CD4-positive, alpha-beta T cell (primary cell): ENCODE measurements at regions of chr7 and their contacts with region 1.

Region 1: DNA sequence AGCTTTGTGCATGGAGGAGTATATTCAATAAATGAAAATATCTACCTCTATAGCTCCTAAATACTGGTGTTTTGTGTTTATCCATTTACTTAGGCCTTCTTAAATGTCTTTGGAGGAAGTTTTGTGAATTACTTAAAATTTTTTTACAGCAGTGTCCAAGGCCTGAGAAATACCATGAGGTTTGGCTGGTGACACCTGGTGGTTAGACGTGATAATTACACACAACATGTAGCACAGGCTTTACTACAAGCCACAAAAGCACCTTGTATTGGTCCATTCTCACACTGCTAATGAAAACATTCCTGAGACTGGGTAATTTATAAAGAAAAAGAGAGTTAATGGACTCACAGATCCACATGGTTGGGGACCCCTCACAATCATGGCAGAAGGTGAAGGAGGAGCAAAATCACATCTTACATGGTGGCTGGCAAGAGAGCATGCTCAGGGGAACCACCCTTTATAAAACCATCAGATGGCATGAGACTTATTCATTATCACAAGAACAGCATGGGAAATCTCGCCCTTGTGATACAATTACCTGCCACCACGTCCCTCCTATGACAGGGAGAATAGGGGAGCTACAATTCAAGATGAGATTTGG is 20.6 kb downstream of the HYAL4 start:
- DNase-seq: peak in 8 of 14 experiments; percentile 5 to 74 (median 32)
- ATAC-seq: peak; percentile 78
- H3K4me3 ChIP-seq: no peak overlapping the region
- H3K4me3 Mint-ChIP-seq: no peak overlapping the region
- H3K27ac ChIP-seq: no peak overlapping the region
- H3K27ac Mint-ChIP-seq: no peak overlapping the region
- H3K4me1 ChIP-seq: no peaks in the 10 kb centered on the region
- H3K4me1 Mint-ChIP-seq: no peaks in the 10 kb centered on the region
- H3K27me3 ChIP-seq: no peaks in the 10 kb centered on the region
- H3K27me3 Mint-ChIP-seq: peaks cover 4% of the 10 kb centered on the region
- CTCF ChIP-seq: peak; percentile 76

Region 2: GRCh38 chr7:123494193-123494796 is 371.3 kb before region 1 on chr7:
- CTCF ChIA-PET with region 1: no interaction called
- POLR2A ChIA-PET with region 1: no interaction called
- intact Hi-C with region 1: loop called in 1 of 2 experiments (anchors 1 kb)
- DNase-seq: peak in 9 of 14 experiments; percentile 1 to 68 (median 17)
- ATAC-seq: no peak
- H3K4me3 ChIP-seq: no peak overlapping the region
- H3K4me3 Mint-ChIP-seq: no peak overlapping the region
- H3K27ac ChIP-seq: no peak overlapping the region
- H3K27ac Mint-ChIP-seq: no peak overlapping the region
- H3K4me1 ChIP-seq: no peaks in the 10 kb centered on the region
- H3K4me1 Mint-ChIP-seq: no peaks in the 10 kb centered on the region
- H3K27me3 ChIP-seq: peaks cover 0 to 5% of the 10 kb centered on the region in 2 experiments
- H3K27me3 Mint-ChIP-seq: peaks cover 27% of the 10 kb centered on the region
- CTCF ChIP-seq: peak; percentile 86

Region 3: GRCh38 chr7:123580406-123581161 is 285.0 kb before region 1 on chr7:
- CTCF ChIA-PET with region 1: no interaction called
- POLR2A ChIA-PET with region 1: no interaction called
- intact Hi-C with region 1: loop called in 1 of 2 experiments (anchors 5 kb)
- DNase-seq: peak in 3 of 14 experiments; percentile 11 to 32 (median 25)
- ATAC-seq: peak; percentile 41
- H3K4me3 ChIP-seq: no peak overlapping the region
- H3K4me3 Mint-ChIP-seq: no peak overlapping the region
- H3K27ac ChIP-seq: no peak overlapping the region
- H3K27ac Mint-ChIP-seq: no peak overlapping the region
- H3K4me1 ChIP-seq: no peaks in the 10 kb centered on the region
- H3K4me1 Mint-ChIP-seq: no peaks in the 10 kb centered on the region
- H3K27me3 ChIP-seq: peaks cover 0 to 9% of the 10 kb centered on the region in 2 experiments
- H3K27me3 Mint-ChIP-seq: peaks cover 31% of the 10 kb centered on the region
- CTCF ChIP-seq: peak; percentile 18

Region 4: DNA sequence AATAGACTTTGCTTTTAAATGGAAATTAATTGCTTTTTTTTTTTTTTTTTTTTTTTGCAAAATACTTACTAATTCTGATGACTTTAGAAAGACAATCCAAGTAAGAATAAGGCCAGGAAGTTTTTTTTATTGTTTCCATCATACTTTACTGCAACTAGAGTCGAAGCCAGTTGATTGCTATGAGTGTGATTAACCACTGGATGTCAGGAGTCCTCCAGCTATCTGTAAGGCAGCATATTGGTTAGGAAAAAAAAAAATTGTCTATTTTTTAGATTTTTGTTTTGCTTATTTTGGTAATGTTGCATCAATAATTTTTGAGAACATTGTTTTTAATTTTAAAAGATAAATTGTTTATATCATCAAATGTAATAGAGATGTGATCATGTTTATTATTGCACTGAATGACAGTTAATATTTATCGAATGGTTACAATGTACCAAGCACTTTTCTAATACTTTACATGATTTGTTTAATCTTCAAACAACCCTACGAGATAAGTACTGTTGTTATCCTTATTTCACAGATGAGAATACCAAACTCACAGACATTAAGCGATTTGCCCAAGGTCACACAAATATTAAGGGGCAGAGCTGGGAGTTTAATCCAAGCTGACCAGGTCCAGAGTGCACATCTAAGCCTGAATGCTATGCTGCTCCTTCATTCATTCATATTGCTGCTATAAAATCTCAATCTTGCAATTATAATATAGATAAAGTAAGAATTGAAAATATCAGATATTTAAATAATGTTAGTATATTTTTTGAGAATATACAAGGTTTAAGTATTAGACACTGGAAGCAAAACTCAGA is 229.9 kb before region 1 on chr7:
- CTCF ChIA-PET with region 1: no interaction called
- POLR2A ChIA-PET with region 1: no interaction called
- intact Hi-C with region 1: loop called (anchors 1 to 2 kb)
- DNase-seq: peak in 2 of 14 experiments; percentile 9 to 22
- ATAC-seq: no peak
- H3K4me3 ChIP-seq: no peak overlapping the region
- H3K4me3 Mint-ChIP-seq: no peak overlapping the region
- H3K27ac ChIP-seq: no peak overlapping the region
- H3K27ac Mint-ChIP-seq: no peak overlapping the region
- H3K4me1 ChIP-seq: no peaks in the 10 kb centered on the region
- H3K4me1 Mint-ChIP-seq: no peaks in the 10 kb centered on the region
- H3K27me3 ChIP-seq: peaks cover 0 to 12% of the 10 kb centered on the region in 2 experiments
- H3K27me3 Mint-ChIP-seq: peaks cover 25% of the 10 kb centered on the region
- CTCF ChIP-seq: no peak

Region 5: GRCh38 chr7:123682690-123683089 is 182.9 kb before region 1 on chr7:
- CTCF ChIA-PET with region 1: interaction called, 6 read pairs
- POLR2A ChIA-PET with region 1: interaction called, 3 read pairs
- intact Hi-C with region 1: loop called (anchors 1 kb)
- DNase-seq: peak in 4 of 14 experiments; percentile 24 to 60 (median 57)
- ATAC-seq: no peak
- H3K4me3 ChIP-seq: no peak overlapping the region
- H3K4me3 Mint-ChIP-seq: no peak overlapping the region
- H3K27ac ChIP-seq: no peak overlapping the region
- H3K27ac Mint-ChIP-seq: no peak overlapping the region
- H3K4me1 ChIP-seq: no peaks in the 10 kb centered on the region
- H3K4me1 Mint-ChIP-seq: no peaks in the 10 kb centered on the region
- H3K27me3 ChIP-seq: no peaks in the 10 kb centered on the region
- H3K27me3 Mint-ChIP-seq: no peaks in the 10 kb centered on the region
- CTCF ChIP-seq: peak; percentile 68

Region 6: DNA sequence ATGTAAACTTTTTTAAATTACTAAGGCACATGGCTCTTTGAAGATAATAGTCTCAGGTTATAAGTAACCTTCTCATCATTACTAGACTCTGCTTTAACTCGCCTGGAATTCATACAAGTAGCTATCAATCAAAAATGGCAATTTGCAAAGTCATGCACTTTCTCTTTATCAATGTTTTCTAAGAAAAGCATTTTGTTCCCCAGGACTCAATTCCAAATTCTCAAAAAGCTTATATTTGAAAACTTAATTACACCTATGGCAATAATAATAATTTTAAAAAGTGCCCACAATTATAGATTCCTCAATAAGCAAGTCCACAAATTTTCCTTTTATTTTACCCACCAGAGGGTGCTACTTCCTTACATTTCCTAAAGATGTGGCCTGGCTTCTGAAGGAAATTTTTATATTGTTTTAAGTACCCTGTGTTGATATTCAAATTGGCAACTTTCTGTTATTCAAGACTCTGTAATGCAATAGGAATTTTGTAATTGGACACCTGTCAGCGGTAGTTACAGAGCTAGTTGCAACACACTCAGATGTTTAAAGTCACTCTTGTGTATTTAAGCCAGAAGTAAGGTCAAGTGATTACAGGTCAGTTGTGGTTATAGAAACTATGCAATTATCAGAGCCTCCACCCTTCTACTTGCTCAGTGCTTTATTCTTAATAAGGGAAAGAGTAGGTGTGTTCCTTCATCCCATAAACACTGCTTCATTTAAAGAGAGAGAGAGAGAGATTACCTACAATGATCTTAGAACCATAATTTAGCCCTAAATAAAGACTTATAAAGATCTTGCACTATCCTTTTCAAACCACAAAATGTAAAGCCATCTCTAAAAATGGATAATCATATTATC is 67.7 kb before region 1 on chr7:
- CTCF ChIA-PET with region 1: no interaction called
- POLR2A ChIA-PET with region 1: no interaction called
- intact Hi-C with region 1: loop called (anchors 5 kb)
- DNase-seq: peak in 3 of 14 experiments; percentile 2 to 18 (median 11)
- ATAC-seq: no peak
- H3K4me3 ChIP-seq: no peak overlapping the region
- H3K4me3 Mint-ChIP-seq: no peak overlapping the region
- H3K27ac ChIP-seq: no peak overlapping the region
- H3K27ac Mint-ChIP-seq: no peak overlapping the region
- H3K4me1 ChIP-seq: no peaks in the 10 kb centered on the region
- H3K4me1 Mint-ChIP-seq: no peaks in the 10 kb centered on the region
- H3K27me3 ChIP-seq: no peaks in the 10 kb centered on the region
- H3K27me3 Mint-ChIP-seq: no peaks in the 10 kb centered on the region
- CTCF ChIP-seq: peak; percentile 19